A673 (cell line): ENCODE measurements at regions of chr15 and their contacts with region 1.

Region 1: GRCh38 chr15:29596266-29596665 is 226.0 kb downstream of the TJP1 start:
- DNase-seq: no peak
- H3K4me3 ChIP-seq: no peak overlapping the region
- H3K27ac ChIP-seq: no peak overlapping the region
- H3K4me1 ChIP-seq: peaks cover under 1% of the 10 kb centered on the region
- H3K27me3 ChIP-seq: peaks cover 3% of the 10 kb centered on the region
- CTCF ChIP-seq: peak; percentile 42

Region 2: DNA sequence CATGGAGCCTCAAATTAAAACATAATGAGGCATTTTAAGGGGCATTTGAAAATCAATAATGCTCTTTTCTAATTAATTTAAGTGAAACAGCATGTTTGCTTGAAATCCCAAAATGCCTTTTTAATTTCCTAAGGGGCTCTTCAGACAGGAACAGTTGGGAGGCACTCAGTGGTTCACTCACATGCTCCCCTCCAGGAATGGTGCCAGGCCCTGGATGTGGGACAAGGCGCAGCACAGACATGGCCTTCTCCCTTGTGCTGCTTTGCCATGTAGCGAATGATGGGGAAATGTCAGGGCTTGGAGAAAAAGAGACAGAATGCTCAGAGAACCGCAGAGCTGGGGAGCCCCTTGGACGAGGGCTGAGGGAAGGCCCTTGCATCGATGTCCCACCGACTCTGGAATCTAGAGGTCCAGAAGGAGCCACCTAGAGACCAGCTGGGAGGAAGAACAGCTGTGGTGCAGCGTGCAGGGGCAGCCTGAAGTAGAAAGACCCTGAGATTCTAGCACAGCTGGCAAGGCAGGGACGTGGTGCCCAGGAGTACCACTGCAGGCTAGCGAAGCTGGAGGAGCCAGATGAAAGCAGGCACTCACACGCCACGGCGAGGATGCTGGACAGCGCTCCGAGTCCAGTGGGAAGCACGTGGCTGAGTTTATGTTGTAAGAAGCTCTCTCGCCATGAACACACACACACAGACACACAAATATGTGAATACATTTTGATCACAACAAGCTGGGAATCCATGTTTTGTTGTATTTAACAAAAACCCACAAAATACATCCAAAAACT is 353.6 kb before region 1 on chr15:
- CTCF ChIA-PET with region 1: no interaction called
- POLR2A ChIA-PET with region 1: no interaction called
- intact Hi-C with region 1: no loop called
- DNase-seq: no peak
- H3K4me3 ChIP-seq: no peak overlapping the region
- H3K27ac ChIP-seq: no peak overlapping the region
- H3K4me1 ChIP-seq: no peaks in the 10 kb centered on the region
- H3K27me3 ChIP-seq: no peaks in the 10 kb centered on the region
- CTCF ChIP-seq: no peak

Region 3: DNA sequence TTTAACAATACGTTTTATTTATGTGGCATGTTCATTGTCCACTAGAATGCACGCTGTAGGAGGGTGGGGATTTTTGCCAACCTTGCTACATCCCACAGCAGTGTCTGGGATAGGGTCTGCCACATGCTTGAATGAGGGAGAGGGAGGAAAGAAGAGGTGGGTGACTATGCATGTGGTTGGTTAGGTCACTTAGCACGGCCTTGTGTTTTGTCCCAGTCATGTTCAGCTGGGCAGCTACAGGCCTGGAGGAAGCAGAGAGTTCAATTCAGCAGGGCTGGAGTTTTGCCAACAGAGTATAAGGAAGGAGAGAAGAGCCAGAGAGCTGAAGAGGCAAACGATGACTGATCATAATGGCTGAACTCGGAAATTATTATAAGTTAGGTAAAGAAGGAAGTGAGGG is 58.2 kb before region 1 on chr15:
- CTCF ChIA-PET with region 1: no interaction called
- POLR2A ChIA-PET with region 1: no interaction called
- intact Hi-C with region 1: no loop called
- DNase-seq: no peak
- H3K4me3 ChIP-seq: no peak overlapping the region
- H3K27ac ChIP-seq: no peak overlapping the region
- H3K4me1 ChIP-seq: no peaks in the 10 kb centered on the region
- H3K27me3 ChIP-seq: peaks cover 10% of the 10 kb centered on the region
- CTCF ChIP-seq: no peak

Region 4: GRCh38 chr15:29652595-29652994 is 56.3 kb after region 1 on chr15:
- CTCF ChIA-PET with region 1: interaction called, 14 read pairs
- POLR2A ChIA-PET with region 1: no interaction called
- intact Hi-C with region 1: no loop called
- DNase-seq: no peak
- H3K4me3 ChIP-seq: no peak overlapping the region
- H3K27ac ChIP-seq: no peak overlapping the region
- H3K4me1 ChIP-seq: no peaks in the 10 kb centered on the region
- H3K27me3 ChIP-seq: peaks cover 7% of the 10 kb centered on the region
- CTCF ChIP-seq: no peak

Region 5: GRCh38 chr15:29740692-29741311 is 144.5 kb after region 1 on chr15:
- CTCF ChIA-PET with region 1: no interaction called
- POLR2A ChIA-PET with region 1: no interaction called
- intact Hi-C with region 1: no loop called
- DNase-seq: peak; percentile 9
- H3K4me3 ChIP-seq: no peak overlapping the region
- H3K27ac ChIP-seq: no peak overlapping the region
- H3K4me1 ChIP-seq: no peaks in the 10 kb centered on the region
- H3K27me3 ChIP-seq: no peaks in the 10 kb centered on the region
- CTCF ChIP-seq: peak; percentile 56